Mammary epithelial cell (primary cell): ENCODE measurements at regions of chr11 and their contacts with region 1.

Region 1: DNA sequence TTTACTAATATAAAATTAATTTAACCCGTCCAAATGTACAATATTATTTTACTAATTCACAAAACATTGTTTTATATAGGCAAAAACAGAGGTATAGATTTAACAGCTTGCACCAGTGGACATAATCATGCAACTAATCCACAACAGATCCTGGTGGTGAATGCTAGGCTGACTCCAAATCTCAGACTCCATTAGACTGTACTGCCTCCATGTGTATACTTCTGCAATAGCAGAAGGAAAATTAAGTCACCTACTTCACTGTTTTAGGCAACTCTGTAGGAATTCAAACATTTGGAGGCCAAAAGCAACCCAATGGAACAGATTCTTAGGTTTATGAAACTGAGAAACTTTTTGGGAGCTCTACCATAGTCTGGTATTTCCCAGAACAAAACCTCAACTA is 30.0 kb upstream of the RAB39A start:
- DNase-seq: peak; percentile 35
- H3K4me3 ChIP-seq: no peak overlapping the region
- H3K27ac ChIP-seq: no peak overlapping the region
- H3K4me1 ChIP-seq: no peaks in the 10 kb centered on the region
- H3K27me3 ChIP-seq: no peaks in the 10 kb centered on the region
- CTCF ChIP-seq: peak; percentile 67 to 86

Region 2: DNA sequence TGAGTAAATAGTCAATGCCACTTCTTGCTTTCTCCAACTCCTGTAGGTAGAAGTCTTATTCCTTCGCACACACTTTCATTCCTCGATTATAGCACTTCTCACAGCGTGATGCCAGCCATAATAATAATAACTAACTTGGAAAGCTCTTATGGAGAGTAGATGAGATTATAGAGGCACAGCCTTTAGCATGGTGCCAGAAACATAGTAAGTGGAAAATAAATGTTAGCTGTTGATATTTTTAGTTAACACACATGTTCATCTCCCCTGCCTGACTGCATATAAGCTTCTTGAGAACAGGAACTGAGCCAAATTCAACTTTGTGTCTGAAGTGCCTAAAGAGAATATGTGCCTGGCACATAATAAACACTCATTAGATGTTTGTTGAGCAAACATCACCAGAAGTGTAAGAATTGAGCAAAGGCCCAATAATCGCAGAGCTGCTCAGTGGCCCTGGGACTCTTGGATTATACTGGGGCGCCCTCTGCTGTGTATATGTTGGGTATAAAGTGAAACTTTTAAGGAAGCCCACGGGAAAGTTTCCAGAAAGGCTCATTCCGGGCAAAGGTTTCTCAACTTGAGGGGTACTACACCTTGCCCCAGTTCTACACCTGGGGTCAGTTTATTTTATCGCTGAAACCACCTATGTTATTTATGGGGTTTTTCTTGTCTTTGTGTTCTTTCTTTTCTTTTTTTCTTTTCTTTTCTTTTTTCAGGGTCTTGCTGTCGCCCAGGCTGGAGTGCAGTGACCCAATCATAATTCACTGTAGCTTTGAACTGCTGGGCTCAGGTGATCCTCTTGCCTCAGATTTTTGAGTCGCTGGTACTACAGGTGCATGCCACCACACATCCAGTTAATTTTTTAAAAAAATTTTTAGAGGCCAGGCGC is 208.7 kb before region 1 on chr11:
- CTCF ChIA-PET with region 1: no interaction called
- dilution Hi-C with region 1: no loop called
- in situ Hi-C with region 1: no loop called
- intact Hi-C with region 1: loop called (anchors 2 kb)
- DNase-seq: peak; percentile 34
- H3K4me3 ChIP-seq: no peak overlapping the region
- H3K27ac ChIP-seq: no peak overlapping the region
- H3K4me1 ChIP-seq: no peaks in the 10 kb centered on the region
- H3K27me3 ChIP-seq: no peaks in the 10 kb centered on the region
- CTCF ChIP-seq: peak; percentile 28 to 72

Region 3: DNA sequence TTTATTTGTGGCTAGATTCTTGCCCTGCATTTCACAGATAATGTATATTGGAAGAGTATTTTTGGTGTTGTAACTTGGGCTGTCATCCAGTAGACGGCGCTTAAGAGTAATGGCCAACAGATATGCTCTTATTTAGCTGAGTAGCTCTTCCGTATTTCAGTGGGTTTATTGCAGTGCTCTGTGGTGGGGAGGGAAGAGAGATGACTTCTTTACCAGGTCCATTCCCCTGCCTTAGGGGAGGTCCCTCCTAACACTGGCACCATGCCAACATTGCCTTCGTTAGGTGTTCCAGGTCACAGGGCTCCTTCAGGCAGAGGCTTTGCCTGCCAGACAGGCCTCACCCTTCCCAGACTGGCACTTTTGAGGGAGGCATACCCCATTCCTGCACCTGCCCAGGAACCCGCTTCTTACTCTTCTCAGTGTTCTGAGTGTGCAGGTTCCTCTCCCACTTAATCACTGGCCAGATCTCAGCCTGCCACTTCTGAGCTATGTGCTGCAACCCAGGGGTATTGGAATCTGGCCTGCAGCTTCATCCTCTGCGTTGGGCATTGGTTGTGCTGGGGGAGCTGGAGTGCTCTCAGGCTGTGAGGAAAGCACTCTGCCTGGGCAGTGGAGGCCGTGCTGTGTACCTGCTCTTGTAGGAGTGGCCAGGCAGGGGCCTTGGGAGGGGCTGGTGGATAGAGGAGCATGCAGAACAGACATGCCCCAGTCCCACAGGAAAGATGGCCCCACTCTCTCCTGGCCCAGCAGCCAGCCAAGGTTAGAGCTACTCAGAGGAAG is 157.0 kb before region 1 on chr11:
- CTCF ChIA-PET with region 1: no interaction called
- dilution Hi-C with region 1: no loop called
- in situ Hi-C with region 1: loop called in 1 of 2 experiments (anchors 5 kb)
- intact Hi-C with region 1: loop called (anchors 1 kb)
- DNase-seq: peak; percentile 14
- H3K4me3 ChIP-seq: no peak overlapping the region
- H3K27ac ChIP-seq: no peak overlapping the region
- H3K4me1 ChIP-seq: no peaks in the 10 kb centered on the region
- H3K27me3 ChIP-seq: no peaks in the 10 kb centered on the region
- CTCF ChIP-seq: peak; percentile 68 to 73

Region 4: GRCh38 chr11:107799218-107799859 is 98.9 kb before region 1 on chr11:
- CTCF ChIA-PET with region 1: no interaction called
- dilution Hi-C with region 1: no loop called
- in situ Hi-C with region 1: no loop called
- intact Hi-C with region 1: loop called (anchors 1 kb)
- DNase-seq: peak; percentile 38
- H3K4me3 ChIP-seq: no peak overlapping the region
- H3K27ac ChIP-seq: no peak overlapping the region
- H3K4me1 ChIP-seq: no peaks in the 10 kb centered on the region
- H3K27me3 ChIP-seq: no peaks in the 10 kb centered on the region
- CTCF ChIP-seq: peak; percentile 96 to 99

Region 5: GRCh38 chr11:107858217-107859070 is 39.8 kb before region 1 on chr11 and contains the start of gene SLC35F2:
- CTCF ChIA-PET with region 1: no interaction called
- dilution Hi-C with region 1: no loop called
- in situ Hi-C with region 1: no loop called
- intact Hi-C with region 1: loop called (anchors 2 kb)
- DNase-seq: peak; percentile 89
- H3K4me3 ChIP-seq: peak within 1 kb of the TSS; percentile 81 to 94 (median 91)
- H3K27ac ChIP-seq: peak within 1 kb of the TSS; percentile 35
- H3K4me1 ChIP-seq: peaks cover 12% of the 10 kb centered on the region
- H3K27me3 ChIP-seq: no peaks in the 10 kb centered on the region
- CTCF ChIP-seq: peak in 1 of 2 donors; percentile 22
- total RNA-seq, gene SLC35F2: 23.5 to 35.3 TPM